OCI-LY7 (cell line): ENCODE measurements at regions of chr17 and their contacts with region 1.

Region 1: DNA sequence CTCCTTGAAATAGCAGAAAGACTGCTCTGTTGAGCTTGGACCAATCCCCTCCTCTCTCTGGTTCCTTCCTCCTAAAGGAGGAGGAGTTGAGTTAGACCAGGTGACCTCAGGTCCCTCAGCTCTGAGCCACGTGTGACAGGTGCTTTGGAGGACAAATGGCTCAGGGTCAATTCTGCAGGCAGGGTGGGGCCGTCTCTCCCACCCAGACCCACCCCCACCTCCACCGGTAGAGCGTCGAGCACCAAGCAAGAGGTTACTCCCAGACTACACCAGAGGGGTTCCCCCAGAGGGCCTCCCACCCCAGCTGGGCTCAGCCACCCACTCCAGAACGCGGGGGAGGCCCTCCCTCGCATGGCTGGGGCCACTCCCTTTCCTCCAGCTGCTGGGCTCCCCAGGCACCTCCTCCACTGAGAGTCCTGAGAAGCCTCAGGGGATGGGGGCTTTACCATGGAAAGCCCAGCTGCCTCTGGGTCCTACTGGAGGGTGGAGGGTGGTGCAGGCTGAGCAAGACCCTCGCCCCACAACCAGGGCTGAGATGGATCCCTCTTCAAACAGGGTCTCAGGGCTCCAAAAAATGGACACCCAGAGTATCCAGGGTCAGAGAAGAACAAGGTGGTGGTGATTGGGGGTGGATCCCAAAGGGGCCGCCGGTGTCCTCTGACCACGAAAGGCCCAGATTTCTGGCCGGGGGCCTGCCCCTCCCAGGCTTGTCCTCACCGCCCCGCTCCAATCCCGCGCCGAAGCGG is 7.6 kb downstream of the MYO1C start:
- DNase-seq: peak; percentile 65
- H3K4me3 ChIP-seq: peak overlapping the region; percentile 73
- H3K27ac ChIP-seq: peak overlapping the region; percentile 45
- H3K4me1 ChIP-seq: peaks cover 43% of the 10 kb centered on the region
- CTCF ChIP-seq: no peak

Region 2: DNA sequence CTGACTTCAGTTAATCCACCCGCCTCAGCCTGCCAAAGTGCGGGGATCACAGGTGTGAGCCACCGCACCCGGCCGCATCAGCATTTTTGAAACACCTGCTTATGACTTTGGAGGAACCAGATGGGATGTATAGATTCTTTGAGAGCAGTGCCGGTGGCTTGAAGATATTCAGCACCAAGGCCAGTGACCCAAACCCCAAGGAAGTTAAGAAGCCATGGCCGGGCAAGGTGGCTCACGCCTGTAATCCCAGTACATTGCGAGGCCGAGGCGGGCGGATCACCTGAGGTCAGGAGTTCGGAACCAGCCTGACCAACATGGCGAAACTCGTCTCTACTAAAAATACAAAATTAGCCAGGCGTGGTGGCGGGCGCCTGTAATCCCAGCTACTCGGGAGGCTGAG is 161.5 kb before region 1 on chr17:
- CTCF ChIA-PET with region 1: no interaction called
- POLR2A ChIA-PET with region 1: no interaction called
- intact Hi-C with region 1: no loop called
- DNase-seq: no peak
- H3K4me3 ChIP-seq: no peak overlapping the region
- H3K27ac ChIP-seq: no peak overlapping the region
- H3K4me1 ChIP-seq: no peaks in the 10 kb centered on the region
- CTCF ChIP-seq: no peak

Region 3: GRCh38 chr17:1462287-1463112 is 22.3 kb before region 1 on chr17:
- CTCF ChIA-PET with region 1: no interaction called
- POLR2A ChIA-PET with region 1: no interaction called
- intact Hi-C with region 1: loop called (anchors 1 kb)
- DNase-seq: no peak
- H3K4me3 ChIP-seq: peak overlapping the region; percentile 50
- H3K27ac ChIP-seq: peak overlapping the region; percentile 36
- H3K4me1 ChIP-seq: peaks cover 22% of the 10 kb centered on the region
- CTCF ChIP-seq: no peak

Region 4: DNA sequence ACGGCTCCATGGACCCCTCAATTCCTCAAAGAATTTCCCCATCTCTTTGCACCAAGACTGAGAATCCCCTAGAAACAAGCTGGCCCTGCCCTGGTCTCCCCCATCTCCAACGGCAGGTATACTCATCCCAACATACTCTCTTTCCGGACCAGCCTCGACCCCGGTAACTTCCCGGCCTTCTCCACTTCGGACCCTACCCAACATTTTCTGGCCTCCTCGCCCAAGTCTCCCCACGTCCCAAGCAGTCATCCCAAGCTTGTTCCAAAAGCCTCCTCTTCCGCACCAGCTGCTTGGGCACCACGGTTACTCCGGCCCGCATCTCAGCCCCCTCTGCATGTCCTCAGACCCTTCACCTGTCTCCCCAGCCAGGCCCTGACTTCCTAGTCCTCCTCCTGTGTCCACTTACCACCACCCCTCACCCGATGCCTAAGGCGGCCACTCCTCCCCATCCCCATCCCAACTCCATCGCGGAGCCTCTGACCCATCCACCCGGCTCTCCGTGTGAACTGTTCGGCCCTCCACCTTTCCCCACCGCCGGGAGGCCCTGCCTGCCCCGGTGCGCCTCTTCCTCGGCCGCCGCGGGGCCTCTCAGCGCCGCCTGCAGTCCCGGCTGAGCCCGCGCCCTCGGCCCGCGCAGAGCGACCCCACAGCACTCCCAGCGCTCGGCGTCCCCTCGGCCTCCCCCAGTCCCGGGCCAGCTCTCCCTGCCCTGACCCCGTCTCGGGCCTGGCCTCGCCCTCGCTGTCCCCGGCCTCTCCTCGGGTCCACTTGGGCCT is 76.7 kb after region 1 on chr17:
- CTCF ChIA-PET with region 1: no interaction called
- POLR2A ChIA-PET with region 1: no interaction called
- intact Hi-C with region 1: loop called (anchors 2 kb)
- DNase-seq: peak; percentile 51
- H3K4me3 ChIP-seq: peak overlapping the region; percentile 82
- H3K27ac ChIP-seq: no peak overlapping the region
- H3K4me1 ChIP-seq: peaks cover 23% of the 10 kb centered on the region
- CTCF ChIP-seq: peak; percentile 60